PC-9 (cell line): ENCODE measurements at regions of chr3 and their contacts with region 1.

Region 1: DNA sequence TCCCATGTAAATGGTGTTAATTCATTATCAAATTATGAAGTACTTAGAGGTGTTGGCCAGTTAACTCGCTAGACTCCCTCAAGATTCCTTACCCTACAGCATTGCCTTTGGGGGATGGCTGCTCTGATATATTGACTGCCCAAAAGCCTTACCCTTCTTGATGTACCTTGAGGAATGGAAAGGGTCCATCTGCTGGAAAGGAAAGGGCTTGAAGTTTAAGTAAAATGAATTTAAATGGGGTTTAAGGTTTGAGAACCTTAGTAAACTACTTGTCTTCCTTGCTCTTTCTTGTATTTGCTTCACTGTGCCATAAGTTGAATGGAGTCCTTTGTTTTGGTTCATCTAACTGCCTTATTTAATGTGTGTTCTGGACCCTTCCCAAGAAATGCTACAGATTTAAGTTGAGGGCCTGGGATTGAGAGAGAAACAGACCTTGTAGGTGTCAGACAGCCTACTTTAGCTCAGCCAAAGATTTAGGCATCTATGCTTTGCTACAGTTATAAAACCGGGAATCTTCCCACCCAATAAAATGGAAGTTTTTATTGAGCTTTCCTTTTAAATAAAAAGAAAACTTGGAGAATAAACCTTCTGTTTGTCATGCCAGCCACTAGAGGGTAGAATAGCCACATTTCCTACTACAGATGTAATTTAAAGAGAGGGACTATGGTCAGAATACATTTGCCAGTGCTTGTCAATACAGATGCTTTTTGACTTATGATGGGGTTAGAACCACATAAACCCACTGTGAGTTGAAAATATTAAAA is 25.3 kb downstream of the CMSS1 start:
- DNase-seq: peak in 1 of 2 experiments; percentile 64
- H3K4me3 ChIP-seq: no peak overlapping the region
- H3K27ac ChIP-seq: no peak overlapping the region
- H3K4me1 ChIP-seq: peaks cover 24% of the 10 kb centered on the region
- H3K27me3 ChIP-seq: no peaks in the 10 kb centered on the region
- CTCF ChIP-seq: peak; percentile 98

Region 2: DNA sequence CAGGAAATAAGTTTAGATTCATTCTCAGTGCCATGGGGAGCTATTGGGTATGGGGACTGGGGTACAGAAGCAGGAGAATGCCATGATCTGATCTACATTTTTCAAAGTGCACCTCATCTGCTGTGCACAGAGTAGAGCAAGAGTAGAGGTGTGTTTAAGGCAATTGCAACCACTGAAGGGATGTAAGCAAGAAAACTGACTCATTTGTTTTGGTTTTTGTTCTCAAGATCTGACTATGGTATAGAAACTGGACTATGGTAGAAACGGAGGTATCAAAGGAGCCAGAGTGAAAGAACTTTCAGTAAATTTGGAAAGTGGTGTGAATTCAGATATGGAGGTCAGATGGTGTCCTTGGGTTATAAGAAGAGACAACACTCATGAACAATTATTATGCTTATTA is 111.5 kb before region 1 on chr3:
- CTCF ChIA-PET with region 1: no interaction called
- POLR2A ChIA-PET with region 1: no interaction called
- intact Hi-C with region 1: no loop called
- DNase-seq: no peak
- H3K4me3 ChIP-seq: no peak overlapping the region
- H3K27ac ChIP-seq: no peak overlapping the region
- H3K4me1 ChIP-seq: no peaks in the 10 kb centered on the region
- H3K27me3 ChIP-seq: no peaks in the 10 kb centered on the region
- CTCF ChIP-seq: no peak

Region 3: DNA sequence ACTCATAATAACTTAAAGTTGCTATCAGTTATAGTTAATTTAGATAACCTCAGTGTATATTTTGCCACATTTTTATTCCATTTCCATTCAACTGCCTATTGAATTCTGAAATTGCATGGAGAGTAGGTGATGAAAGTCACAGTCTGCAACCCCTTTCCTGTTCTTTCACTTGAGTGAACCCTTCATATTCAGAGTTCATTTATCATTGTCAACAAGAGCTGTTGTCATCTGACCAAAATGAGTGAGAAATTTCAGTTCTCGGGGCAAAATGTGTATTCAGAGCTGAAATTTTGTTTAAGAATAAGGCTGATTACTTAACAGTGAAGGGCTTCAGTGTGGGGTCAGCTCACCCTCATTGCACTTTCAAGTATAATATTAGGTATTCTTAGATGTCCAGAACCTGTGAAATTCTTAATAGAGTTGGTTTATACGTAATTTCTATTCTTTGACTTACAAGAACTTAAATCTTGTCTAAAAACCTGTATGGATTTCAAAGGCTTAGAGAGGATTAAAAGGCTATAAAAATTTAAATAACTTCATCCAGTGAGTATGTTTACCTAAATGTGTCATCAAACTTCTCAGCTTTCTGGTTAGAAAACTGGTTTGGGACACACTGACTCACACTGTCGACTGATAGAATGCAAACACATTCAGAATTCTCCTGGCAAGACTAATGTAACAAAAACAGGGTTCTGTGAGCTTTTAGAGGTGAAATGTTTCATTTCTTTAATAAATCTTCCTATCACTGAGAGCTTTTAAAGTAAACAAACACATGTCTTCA is 66.9 kb after region 1 on chr3:
- CTCF ChIA-PET with region 1: no interaction called
- POLR2A ChIA-PET with region 1: no interaction called
- intact Hi-C with region 1: loop called (anchors 1 kb)
- DNase-seq: peak; percentile 46 to 100
- H3K4me3 ChIP-seq: peak overlapping the region; percentile 26; the same call in 1 of the 2 replicates
- H3K27ac ChIP-seq: peak overlapping the region; percentile 91
- H3K4me1 ChIP-seq: peaks cover 52% of the 10 kb centered on the region
- H3K27me3 ChIP-seq: no peaks in the 10 kb centered on the region
- CTCF ChIP-seq: no peak

Region 4: GRCh38 chr3:100041328-100041749 is 198.3 kb after region 1 on chr3:
- CTCF ChIA-PET with region 1: interaction called, 6 read pairs
- POLR2A ChIA-PET with region 1: no interaction called
- intact Hi-C with region 1: loop called (anchors 1 kb)
- DNase-seq: peak; percentile 24 to 93
- H3K4me3 ChIP-seq: peak overlapping the region; percentile 1; the same call in 1 of the 2 replicates
- H3K27ac ChIP-seq: peak overlapping the region; percentile 90
- H3K4me1 ChIP-seq: peaks cover 57% of the 10 kb centered on the region
- H3K27me3 ChIP-seq: no peaks in the 10 kb centered on the region
- CTCF ChIP-seq: no peak

Region 5: DNA sequence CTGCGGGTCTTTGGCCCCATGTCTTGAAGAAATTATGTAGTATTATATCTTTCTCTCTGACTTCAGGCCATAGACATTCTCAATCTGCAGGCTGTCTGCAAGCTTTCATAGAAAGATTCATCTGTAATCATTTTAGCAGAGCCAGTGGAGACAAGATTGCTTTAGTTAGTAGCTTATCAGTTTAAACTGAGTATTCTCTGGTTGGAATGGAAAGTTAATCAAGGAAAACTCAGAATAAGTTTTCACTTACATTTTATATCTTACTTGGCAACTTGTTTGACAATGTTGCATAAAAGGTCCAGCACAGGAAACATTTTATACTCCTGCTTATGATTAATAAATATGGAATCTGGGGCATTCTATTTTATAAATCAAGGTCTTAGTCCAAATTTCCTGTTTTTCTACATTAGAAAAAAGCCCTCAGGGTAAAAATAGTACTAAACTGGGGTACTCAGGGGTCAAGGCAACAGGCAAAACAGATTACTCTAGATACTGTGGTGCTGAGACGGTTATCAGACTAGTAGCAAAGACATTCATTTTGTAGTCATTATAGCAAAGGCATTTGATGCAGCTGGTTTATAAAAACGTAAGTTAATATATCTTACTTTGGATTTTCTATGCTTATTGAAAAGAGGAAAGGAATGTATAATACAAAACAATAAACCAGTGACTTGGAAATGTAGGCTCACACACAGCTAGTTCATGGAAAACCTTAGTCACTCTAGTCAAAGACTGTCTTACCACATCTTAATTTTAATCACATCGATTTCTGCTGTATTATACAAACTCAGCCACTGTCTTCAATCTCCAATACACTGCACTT is 316.5 kb after region 1 on chr3:
- CTCF ChIA-PET with region 1: interaction called, 6 read pairs
- POLR2A ChIA-PET with region 1: no interaction called
- intact Hi-C with region 1: loop called (anchors 10 kb)
- DNase-seq: peak; percentile 29 to 97
- H3K4me3 ChIP-seq: peak overlapping the region; percentile 10
- H3K27ac ChIP-seq: peak overlapping the region; percentile 75
- H3K4me1 ChIP-seq: peaks cover 39% of the 10 kb centered on the region
- H3K27me3 ChIP-seq: no peaks in the 10 kb centered on the region
- CTCF ChIP-seq: no peak

Region 6: GRCh38 chr3:101779047-101779821 is 1936.2 kb after region 1 on chr3 and contains the start of gene NXPE3:
- CTCF ChIA-PET with region 1: no interaction called
- POLR2A ChIA-PET with region 1: interaction called, 10 read pairs
- intact Hi-C with region 1: no loop called
- DNase-seq: peak; percentile 74 to 93
- H3K4me3 ChIP-seq: peak within 1 kb of the TSS; percentile 82
- H3K27ac ChIP-seq: no peak within 1 kb of the TSS
- H3K4me1 ChIP-seq: peaks cover 5% of the 10 kb centered on the region
- H3K27me3 ChIP-seq: no peaks in the 10 kb centered on the region
- CTCF ChIP-seq: 0 out of 2 replicates have a peak, but pooled peaks have one; percentile 6
- total RNA-seq, gene NXPE3: 12.0 and 12.8 TPM in 2 replicates